Right cardiac atrium (tissue), 5 donors: ENCODE measurements at regions of chr3 and their contacts with region 1.

Region 1: GRCh38 chr3:111998636-111999483 is at the start of gene TAGLN3:
- DNase-seq: peak in 1 of 3 donors; percentile 49
- ATAC-seq: peak; percentile 59 to 67
- H3K4me3 ChIP-seq: peak within 1 kb of the TSS; percentile 28
- H3K27ac ChIP-seq: no peak within 1 kb of the TSS
- H3K4me1 ChIP-seq: peaks cover 3% of the 10 kb centered on the region
- H3K27me3 ChIP-seq: no peaks in the 10 kb centered on the region
- total RNA-seq, gene TAGLN3: 0.28 to 0.74 (median 0.53) TPM in 3 of 4 donors, not detected in the other

Region 2: DNA sequence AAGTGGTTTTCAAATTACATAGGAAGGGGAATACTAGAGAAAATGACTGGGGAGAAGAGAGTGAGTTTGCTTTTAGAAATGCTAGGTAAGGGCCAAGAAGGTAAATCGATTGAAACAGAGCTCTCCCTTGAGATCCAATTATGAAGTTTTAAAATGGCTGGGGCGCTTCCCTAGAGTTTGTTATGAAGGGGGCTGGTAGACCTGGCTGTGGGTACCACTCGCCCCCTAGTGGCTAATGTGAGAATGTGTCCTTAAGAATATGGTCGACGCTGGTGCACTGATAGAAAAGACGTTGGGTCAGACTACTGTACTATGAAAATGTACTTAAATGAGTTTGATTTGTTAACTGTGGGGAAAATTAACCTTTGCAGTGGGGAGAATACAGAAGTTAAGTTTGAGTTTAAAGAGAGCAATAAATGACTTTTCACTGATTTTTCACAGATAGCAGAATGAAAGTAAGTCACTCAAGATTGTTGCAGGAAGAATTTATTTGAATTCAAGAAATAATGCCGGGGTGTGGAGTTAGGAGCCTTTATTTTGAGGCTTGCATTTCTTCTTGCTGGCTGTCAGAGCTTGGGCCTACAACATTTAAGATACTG is 44.8 kb after region 1 on chr3:
- intact Hi-C with region 1: loop called in 1 of 4 experiments (anchors 5 kb)
- DNase-seq: peak in 2 of 3 donors; percentile 16 to 41
- ATAC-seq: peak; percentile 90 to 95
- H3K4me3 ChIP-seq: no peak overlapping the region
- H3K27ac ChIP-seq: no peak overlapping the region
- H3K4me1 ChIP-seq: no peaks in the 10 kb centered on the region
- H3K27me3 ChIP-seq: no peaks in the 10 kb centered on the region